Common myeloid progenitor, CD34-positive (primary cell): ENCODE measurements at regions of chr15 and their contacts with region 1.

Region 1: DNA sequence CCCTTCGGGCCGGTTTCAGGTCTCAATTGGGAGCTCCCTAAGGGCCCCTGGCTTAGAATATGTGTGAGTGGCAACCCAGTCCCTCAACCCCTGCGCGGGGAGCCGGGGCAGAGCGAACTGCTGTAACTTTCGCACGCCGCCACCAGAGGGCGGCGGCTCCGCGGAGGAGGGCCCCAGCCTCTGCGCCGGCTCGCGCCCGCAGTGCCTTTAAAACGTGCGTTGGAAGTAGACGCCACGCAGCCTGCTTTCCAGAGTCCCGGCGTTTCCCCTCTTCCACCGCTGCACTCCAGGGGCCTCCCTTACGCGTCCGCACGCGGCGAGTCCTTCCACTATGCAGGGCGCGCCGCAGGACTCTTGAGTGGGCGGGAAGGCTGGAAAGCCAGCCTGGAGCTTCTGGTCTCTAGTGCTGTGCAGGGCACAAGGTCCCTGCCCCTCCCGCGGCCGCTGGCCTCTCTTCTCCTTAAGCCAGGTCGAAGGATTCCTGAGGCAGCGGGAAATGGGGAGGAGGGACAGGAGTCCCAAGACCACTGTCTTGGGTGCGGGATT is 23.7 kb upstream of the RNU6-1 start:
- DNase-seq: peak; percentile 69 to 82 (median 79)
- H3K4me3 ChIP-seq: peak overlapping the region; percentile 8 to 70 (median 55)
- H3K27ac ChIP-seq: no peak overlapping the region
- H3K4me1 ChIP-seq: peaks cover 6 to 10% (median 9%) of the 10 kb centered on the region in 4 experiments
- H3K27me3 ChIP-seq: no peaks in the 10 kb centered on the region

Region 2: GRCh38 chr15:67803996-67804843 is 59.3 kb before region 1 on chr15:
- CTCF ChIA-PET with region 1: no interaction called
- POLR2A ChIA-PET with region 1: no interaction called
- DNase-seq: no peak
- H3K4me3 ChIP-seq: no peak overlapping the region
- H3K27ac ChIP-seq: no peak overlapping the region
- H3K4me1 ChIP-seq: peaks cover 0 to 15% (median 2%) of the 10 kb centered on the region in 4 experiments
- H3K27me3 ChIP-seq: no peaks in the 10 kb centered on the region

Region 3: GRCh38 chr15:67843571-67844387 is 19.7 kb before region 1 on chr15:
- CTCF ChIA-PET with region 1: interaction called, 14 read pairs
- POLR2A ChIA-PET with region 1: no interaction called
- DNase-seq: no peak
- H3K4me3 ChIP-seq: no peak overlapping the region
- H3K27ac ChIP-seq: no peak overlapping the region
- H3K4me1 ChIP-seq: peaks cover 5 to 35% (median 17%) of the 10 kb centered on the region in 4 experiments
- H3K27me3 ChIP-seq: no peaks in the 10 kb centered on the region

Region 4: DNA sequence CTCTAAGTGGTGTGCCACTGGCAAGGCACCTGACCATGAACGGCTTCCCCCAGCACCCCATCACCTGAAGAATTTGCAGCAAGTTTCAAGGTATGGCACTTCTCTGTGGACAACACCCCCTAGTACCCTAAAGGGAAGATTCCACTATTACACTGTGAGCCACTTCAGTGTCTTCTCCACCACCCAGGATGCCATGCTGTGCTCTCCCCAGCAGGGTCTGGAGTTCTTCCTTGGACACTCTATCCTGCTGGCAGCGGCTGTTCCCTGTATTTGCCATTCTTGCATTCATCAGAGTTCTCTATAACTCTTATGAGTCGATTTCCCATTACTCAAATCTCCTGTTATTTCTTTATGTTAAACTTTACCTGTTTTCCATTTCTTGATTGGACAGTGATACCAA is 10.3 kb after region 1 on chr15:
- CTCF ChIA-PET with region 1: interaction called, 19 read pairs
- POLR2A ChIA-PET with region 1: no interaction called
- DNase-seq: no peak
- H3K4me3 ChIP-seq: no peak overlapping the region
- H3K27ac ChIP-seq: no peak overlapping the region
- H3K4me1 ChIP-seq: peaks cover 0 to 1% (median 0%) of the 10 kb centered on the region in 4 experiments
- H3K27me3 ChIP-seq: no peaks in the 10 kb centered on the region

Region 5: DNA sequence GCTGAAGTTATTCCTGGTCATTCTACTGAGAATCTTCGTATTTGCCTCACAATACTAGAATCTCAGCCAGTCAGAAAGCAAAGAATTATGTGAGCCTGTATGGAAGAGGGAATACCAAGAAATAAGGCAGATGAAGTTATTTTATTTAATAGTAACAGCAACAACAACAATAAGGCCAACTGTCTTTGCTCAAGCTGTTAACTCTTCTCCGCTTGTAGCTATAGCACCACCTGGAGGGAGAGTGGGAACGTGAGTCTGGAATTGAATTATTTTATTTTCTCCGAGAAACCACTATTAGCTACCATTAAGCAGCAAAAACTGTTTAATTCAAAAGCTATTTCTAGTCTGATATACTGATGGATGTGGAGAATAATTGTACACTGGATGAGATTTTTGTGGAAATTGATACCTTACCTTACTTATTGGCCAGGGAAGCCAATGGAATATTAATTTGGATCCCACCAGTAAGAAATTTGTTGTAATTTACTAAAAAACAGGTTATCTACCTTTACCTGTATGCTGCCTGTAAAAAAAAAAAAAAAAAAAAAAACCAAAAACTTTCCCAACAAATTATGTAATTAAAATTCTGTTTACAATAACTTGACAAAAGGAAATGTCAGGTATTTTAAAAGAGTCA is 291.5 kb after region 1 on chr15:
- CTCF ChIA-PET with region 1: interaction called, 59 read pairs
- POLR2A ChIA-PET with region 1: no interaction called
- DNase-seq: peak; percentile 69 to 85 (median 82)
- H3K4me3 ChIP-seq: no peak overlapping the region
- H3K27ac ChIP-seq: peak overlapping the region in 1 of 2 experiments; percentile 43
- H3K4me1 ChIP-seq: no peaks in the 10 kb centered on the region
- H3K27me3 ChIP-seq: no peaks in the 10 kb centered on the region